Posterior cingulate gyrus (tissue), 11 donors: ENCODE measurements at regions of chr16 and their contacts with region 1.

Region 1: GRCh38 chr16:87416826-87417527 is 24.8 kb downstream of the MAP1LC3B start:
- DNase-seq: peak in 3 of 10 donors; percentile 36 to 83 (median 72)

Region 2: DNA sequence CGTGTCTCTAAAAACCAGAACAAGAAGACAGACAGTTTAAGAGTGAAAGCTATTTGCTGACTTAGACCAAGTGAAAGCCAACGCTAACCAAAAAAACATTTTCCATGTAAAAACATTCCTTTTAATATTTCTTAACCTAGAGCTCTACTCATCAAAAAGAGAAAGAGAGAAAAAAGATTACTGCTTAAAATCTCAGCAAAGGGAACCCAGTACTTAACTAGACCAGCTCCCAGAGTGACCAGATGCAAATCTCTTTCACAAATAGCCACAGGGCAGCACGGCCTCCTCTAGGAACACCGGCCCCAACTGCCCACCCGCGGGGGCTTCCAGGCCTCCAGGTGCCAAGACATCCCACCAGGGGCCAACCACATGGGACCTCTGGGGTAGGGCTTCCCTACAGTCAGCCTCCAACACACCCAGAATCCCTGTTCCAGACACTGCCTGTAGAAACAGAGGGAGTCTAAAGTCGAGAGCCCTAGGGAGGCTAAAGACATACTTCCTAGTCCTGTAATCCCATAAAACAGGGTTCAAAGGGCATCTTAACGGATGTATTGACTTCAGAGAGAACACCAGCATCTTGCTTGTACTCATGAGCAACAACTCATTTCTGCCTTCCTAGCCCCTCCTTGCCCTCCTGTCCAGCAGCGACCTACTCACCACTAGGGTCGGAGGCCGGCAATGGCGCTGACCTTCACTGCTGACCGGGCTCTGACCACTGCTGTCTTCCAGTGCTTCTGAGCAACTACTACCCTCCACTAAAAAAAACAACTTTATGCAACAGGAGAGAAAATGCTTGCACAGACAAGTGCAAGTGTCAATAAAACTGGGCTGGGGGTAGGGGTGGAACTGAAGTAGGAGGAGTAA is 54.5 kb after region 1 on chr16:
- intact Hi-C with region 1: loop called (anchors 10 kb)
- DNase-seq: no peak